GM10248 (cell line): ENCODE measurements at regions of chr14 and their contacts with region 1.

Region 1: GRCh38 chr14:87615822-87616679 is 376.9 kb downstream of the GALC start:
- DNase-seq: peak; percentile 37
- CTCF ChIP-seq: peak; percentile 72

Region 2: GRCh38 chr14:87600240-87600639 is 15.8 kb before region 1 on chr14:
- CTCF ChIA-PET with region 1: interaction called, 13 read pairs
- POLR2A ChIA-PET with region 1: no interaction called
- DNase-seq: no peak
- CTCF ChIP-seq: no peak

Region 3: DNA sequence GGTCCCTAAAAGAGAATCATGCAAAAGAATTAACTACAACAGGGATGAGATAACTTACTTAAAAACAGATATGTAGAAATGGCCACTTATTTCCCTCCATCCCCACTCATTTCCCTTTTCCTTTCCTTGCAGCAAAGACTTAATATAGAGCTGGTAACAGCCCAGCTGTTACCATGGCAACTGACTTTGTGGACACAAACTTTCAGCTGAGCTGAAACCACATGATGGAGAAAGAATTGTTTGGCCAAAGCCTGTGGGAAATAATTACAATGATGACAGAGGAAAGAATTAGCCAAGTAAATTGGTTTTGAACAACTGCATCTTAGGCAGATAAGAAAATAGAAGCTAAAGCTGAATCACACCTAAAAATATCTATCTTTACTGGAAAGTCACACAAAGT is 12.1 kb after region 1 on chr14:
- CTCF ChIA-PET with region 1: interaction called, 22 read pairs
- POLR2A ChIA-PET with region 1: no interaction called
- DNase-seq: no peak
- CTCF ChIP-seq: no peak

Region 4: GRCh38 chr14:87635442-87635841 is 19.4 kb after region 1 on chr14:
- CTCF ChIA-PET with region 1: interaction called, 13 read pairs
- POLR2A ChIA-PET with region 1: no interaction called
- DNase-seq: no peak
- CTCF ChIP-seq: no peak